ENCODE measurements at regions of chr6 and their contacts with region 1.

Region 1: DNA sequence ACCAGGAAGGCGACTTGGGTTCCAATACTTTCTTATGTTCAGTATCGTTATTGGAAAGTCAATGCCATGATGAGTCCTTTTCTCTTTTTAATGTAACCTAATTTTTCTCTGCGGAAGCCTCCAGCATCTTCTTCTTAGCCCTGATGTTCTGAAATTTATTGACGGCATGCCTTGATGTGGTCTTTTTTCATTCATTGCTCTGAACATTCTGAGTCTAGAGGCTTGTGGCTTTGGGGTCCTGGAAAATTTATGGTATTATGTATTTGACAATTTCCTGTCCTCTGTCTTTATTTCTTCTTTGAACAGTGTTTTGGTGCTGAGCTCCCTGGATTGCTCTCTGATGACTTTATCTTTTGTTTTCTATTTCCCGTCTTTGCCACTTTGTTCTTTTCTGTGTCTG is 28.7 kb upstream of the MAS1 start:
- DNase-seq: peak; percentile 7
- H3K4me3 Mint-ChIP-seq: no peak overlapping the region
- H3K27ac Mint-ChIP-seq: peak overlapping the region; percentile 14
- H3K4me1 Mint-ChIP-seq: peaks cover 16% of the 10 kb centered on the region
- H3K27me3 Mint-ChIP-seq: no peaks in the 10 kb centered on the region

Region 2: GRCh38 chr6:159720708-159721107 is 141.4 kb before region 1 on chr6:
- CTCF ChIA-PET with region 1: no interaction called
- intact Hi-C with region 1: no loop called
- DNase-seq: peak; percentile 67
- H3K4me3 Mint-ChIP-seq: no peak overlapping the region
- H3K27ac Mint-ChIP-seq: no peak overlapping the region
- H3K4me1 Mint-ChIP-seq: peaks cover 37% of the 10 kb centered on the region
- H3K27me3 Mint-ChIP-seq: no peaks in the 10 kb centered on the region

Region 3: DNA sequence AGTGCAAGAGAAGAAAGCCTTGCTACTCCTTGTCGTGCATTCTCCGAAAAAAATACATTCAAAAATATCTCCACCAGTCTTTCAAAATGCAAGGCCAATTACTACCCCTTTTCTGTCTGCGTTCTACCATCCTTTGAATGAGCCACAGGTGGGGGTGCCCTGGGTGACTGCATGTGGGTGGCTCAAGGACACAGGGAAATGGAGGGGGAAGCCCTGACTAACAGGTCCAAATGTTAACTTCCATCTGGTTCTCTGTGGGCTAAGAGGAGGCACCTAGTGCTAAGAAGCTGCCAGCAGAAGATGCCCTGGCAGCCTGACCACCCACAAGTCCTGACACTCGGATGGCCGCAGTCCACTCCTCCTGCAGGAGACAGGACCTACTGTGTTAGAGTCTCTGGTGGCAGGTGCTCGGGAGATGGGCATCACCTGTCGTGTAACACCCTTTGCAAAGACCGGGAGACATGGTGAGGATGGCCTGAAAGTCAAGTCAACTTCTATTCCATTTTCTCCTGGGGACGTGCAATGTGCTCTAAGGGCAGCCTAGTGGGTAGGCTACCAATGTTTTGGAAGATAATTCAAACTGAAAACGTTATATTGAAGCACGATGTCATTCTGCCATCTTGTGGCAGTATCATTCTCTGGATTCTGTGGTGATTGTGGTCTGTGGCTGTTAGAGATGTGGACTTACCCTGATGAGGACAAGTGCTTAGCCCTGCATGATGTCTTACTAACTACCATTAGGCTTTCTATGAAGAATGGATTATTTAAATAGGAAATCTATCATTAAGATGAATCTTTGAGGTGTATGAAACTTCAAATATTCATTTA is 79.4 kb after region 1 on chr6:
- CTCF ChIA-PET with region 1: interaction called, 32 read pairs
- intact Hi-C with region 1: loop called (anchors 1 kb)
- DNase-seq: peak; percentile 55
- H3K4me3 Mint-ChIP-seq: no peak overlapping the region
- H3K27ac Mint-ChIP-seq: no peak overlapping the region
- H3K4me1 Mint-ChIP-seq: peaks cover 5% of the 10 kb centered on the region
- H3K27me3 Mint-ChIP-seq: peaks cover under 1% of the 10 kb centered on the region

Region 4: DNA sequence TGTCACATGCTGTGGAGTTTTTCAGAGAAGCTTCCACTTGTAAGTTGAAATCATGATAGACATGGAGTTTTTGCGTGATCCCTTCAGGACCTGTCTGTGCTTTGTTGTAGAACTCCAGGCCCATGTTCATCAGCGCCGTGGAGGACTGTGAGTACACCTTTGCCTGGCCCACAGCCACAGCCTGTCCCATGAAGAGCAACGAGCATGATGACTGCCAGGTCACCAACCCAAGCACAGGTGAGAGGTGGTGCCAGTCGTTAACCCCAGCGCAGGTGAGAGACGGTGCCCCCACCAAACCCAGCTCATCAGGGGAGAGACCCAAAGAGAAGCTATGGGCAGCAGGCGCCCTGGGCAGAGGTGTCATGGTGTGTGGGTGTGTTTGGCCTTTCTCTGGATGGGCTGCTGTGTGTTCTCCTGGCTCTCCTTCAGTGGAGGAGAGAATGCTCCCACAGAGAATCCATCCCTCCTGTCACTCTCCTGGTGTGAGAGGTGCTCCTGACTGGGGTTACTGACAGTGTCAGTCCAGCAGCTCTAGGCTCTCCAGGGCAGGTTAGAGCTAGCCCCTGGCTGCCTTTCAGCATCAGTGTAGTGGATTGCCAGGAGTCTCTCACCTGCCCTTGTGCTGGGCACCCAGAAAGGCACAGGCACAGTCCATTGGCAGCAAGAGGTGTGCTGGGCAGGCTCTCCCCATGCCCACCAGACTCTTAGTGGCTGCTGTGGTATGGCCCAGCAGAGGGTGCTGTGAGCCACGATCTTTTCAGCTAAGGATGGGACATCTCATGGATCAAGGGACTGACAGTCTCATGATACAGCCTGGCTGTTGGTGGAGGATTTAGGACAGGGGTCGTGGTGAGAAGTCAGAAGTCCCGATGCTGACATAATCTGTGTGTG is 209.9 kb after region 1 on chr6:
- CTCF ChIA-PET with region 1: interaction called, 3 read pairs
- intact Hi-C with region 1: loop called (anchors 10 kb)
- DNase-seq: peak; percentile 10
- H3K4me3 Mint-ChIP-seq: no peak overlapping the region
- H3K27ac Mint-ChIP-seq: no peak overlapping the region
- H3K4me1 Mint-ChIP-seq: peaks cover 25% of the 10 kb centered on the region
- H3K27me3 Mint-ChIP-seq: no peaks in the 10 kb centered on the region

Region 5: GRCh38 chr6:160102956-160103824 is 241.1 kb after region 1 on chr6:
- CTCF ChIA-PET with region 1: interaction called, 6 read pairs
- intact Hi-C with region 1: loop called (anchors 1 kb)
- DNase-seq: peak; percentile 45
- H3K4me3 Mint-ChIP-seq: no peak overlapping the region
- H3K27ac Mint-ChIP-seq: no peak overlapping the region
- H3K4me1 Mint-ChIP-seq: peaks cover 24% of the 10 kb centered on the region
- H3K27me3 Mint-ChIP-seq: no peaks in the 10 kb centered on the region

Region 6: DNA sequence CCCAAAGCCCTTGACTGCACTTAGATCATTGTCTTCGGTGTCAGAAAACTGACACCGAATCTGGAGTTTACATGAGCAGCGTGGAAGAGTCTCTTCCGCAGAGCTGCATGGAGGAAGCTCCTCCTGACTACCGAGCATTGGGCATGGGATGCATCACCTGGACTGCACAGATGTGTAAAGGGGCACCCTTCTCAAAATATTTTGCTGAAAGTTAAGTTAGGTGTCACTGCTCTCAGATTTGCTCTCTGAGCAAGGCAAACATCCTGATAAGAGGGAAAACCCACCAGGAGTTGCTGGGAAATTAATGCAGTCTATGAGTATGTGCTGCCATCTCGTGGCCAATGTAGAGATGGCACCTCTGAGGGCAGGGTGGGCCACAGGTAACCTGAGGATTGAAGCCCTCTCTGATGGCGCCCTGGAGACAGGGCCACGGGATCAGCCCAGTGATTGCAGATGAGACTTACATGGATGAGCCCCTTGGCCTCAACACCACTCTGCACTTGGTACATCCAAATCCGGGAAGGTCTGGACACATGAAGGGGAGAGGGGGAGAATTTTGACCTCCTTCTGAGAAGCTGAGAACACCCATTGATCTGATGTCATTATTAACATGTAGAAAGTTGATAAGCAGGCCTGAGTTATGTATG is 672.1 kb after region 1 on chr6:
- CTCF ChIA-PET with region 1: interaction called, 4 read pairs
- intact Hi-C with region 1: loop called (anchors 1 kb)
- DNase-seq: peak; percentile 69
- H3K4me3 Mint-ChIP-seq: no peak overlapping the region
- H3K27ac Mint-ChIP-seq: no peak overlapping the region
- H3K4me1 Mint-ChIP-seq: no peaks in the 10 kb centered on the region
- H3K27me3 Mint-ChIP-seq: no peaks in the 10 kb centered on the region

Measured in activated naive CD4-positive, alpha-beta T cell treated with anti-CD3 and anti-CD28 coated beads for 36 hours (primary cell).